ENCODE measurements at regions of chr9 and their contacts with region 1.

Region 1: GRCh38 chr9:21110708-21111576 is 30.7 kb downstream of the IFNW1 start:
- DNase-seq: peak in 1 of 2 donors; percentile 26
- ATAC-seq: peak in 7 of 8 donors; percentile 76 to 92 (median 88)
- H3K4me3 ChIP-seq: no peak overlapping the region
- H3K27ac ChIP-seq: no peak overlapping the region
- H3K4me1 ChIP-seq: no peaks in the 10 kb centered on the region
- H3K27me3 ChIP-seq: no peaks in the 10 kb centered on the region
- CTCF ChIP-seq: peak; percentile 74 to 92 (median 88)

Region 2: DNA sequence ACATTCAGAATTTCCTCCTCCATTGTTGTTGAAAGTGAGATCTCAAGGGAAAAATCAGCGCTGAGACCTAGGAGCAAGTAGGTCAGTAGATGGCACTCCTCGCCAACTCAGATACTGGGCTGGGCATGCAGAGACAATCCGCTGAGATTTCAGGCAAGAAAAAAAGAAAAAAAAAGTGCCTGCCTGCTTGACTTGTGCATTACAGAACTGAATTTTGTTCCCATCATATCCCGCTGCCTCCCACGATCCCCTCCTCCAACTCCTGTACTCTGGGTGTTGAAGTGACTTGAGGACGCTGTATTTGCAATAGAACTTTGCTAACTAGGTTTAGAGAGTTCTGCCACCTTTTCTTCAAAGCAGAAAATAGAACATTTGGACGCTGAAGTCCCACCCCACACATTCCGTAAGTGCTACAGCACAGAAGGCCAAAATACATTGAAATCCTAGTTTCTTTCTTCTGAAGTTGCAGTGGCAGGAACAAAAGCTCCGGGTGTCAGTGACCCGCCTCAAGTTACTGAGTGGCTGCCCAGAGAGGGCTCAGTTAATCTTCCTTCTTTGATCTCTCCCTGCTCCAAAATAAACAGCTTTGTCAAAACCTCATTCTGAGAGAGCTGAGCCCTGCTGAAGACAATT is 754.4 kb before region 1 on chr9:
- intact Hi-C with region 1: loop called in 4 of 10 experiments (anchors 5 to 10 kb)
- DNase-seq: peak; percentile 46 to 79
- ATAC-seq: peak; percentile 77 to 95 (median 91)
- H3K4me3 ChIP-seq: peak overlapping the region in 7 of 10 donors; percentile 0 to 42 (median 33)
- H3K27ac ChIP-seq: peak overlapping the region in 9 of 10 donors; percentile 1 to 76 (median 55)
- H3K4me1 ChIP-seq: peaks cover 0 to 38% (median 17%) of the 10 kb centered on the region in 9 donors
- H3K27me3 ChIP-seq: no peaks in the 10 kb centered on the region
- CTCF ChIP-seq: peak; percentile 55 to 87 (median 69)

Region 3: DNA sequence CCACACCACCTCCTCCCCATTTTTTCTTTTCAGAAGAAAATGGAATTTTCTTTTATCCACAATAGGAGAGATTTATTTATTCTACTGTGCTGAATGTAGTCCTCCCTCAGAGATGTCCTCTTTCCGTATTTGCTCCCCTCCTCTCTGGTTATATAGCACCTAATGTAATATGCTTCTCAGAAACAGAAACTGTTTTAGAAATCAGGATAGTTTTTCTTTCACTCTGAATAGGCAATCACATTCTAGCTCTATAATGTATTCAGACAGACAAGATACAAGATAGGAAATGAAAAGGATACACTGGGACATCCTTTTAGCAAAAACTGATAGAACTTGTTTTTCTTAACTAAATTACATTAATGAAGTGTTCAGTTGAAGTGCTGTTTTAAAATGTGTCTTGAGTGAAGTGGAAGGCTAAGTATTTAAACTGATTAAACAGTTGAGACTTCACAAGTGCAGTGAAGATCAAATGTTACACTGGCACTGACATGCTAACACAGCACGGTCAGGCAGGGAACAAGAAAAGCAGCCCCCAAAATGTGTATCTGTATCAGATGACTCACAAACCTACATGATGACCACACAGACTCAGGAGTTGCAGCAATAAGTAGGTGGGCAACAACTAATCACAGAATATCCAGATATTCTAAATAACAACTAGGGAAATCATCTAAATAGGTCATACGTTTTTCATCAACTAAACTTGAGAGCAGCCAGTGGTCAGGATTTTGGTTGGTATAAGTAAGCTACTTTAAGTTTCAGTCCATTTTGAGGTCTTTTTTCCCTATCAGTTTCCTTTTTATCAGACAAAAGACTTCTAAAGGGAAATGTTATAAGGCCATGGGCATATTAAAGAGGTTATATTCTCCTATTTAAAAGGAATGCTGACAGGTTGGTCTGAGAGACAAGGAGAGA is 749.0 kb before region 1 on chr9:
- intact Hi-C with region 1: loop called in 4 of 10 experiments (anchors 5 to 10 kb)
- DNase-seq: no peak
- ATAC-seq: no peak
- H3K4me3 ChIP-seq: no peak overlapping the region
- H3K27ac ChIP-seq: no peak overlapping the region
- H3K4me1 ChIP-seq: peaks cover 0 to 7% (median 4%) of the 10 kb centered on the region in 9 donors
- H3K27me3 ChIP-seq: no peaks in the 10 kb centered on the region
- CTCF ChIP-seq: no peak

Region 4: DNA sequence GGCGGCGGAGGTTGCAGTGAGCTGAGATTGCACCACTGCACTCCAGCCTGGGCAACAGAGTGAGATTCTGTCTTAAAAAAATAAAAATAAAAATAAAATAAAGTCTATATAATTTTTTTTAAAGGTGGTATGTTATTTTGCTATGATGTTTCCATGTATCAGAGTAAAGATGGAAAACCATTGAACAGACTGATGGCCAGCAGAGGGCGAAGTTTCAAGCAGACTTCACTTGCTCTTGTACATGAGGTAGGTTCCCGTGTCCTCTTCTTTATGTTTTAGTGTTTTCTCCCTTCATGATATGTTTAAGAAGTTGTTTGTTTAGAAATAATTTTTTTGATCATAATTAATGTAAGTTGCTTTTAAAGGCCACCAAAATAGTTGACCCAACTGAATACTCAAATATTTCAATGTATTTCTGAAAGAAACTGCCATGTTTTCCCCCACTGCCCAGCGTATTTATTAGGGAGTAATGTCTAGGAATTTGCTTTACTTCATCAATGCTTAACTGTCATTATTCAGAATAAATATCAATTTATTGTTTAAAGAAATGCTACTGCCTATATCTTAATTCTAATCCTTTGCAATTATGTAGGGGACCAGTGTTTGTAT is 225.9 kb before region 1 on chr9:
- intact Hi-C with region 1: loop called in 7 of 10 experiments (anchors 2 to 10 kb)
- DNase-seq: peak; percentile 24 to 44
- ATAC-seq: no peak
- H3K4me3 ChIP-seq: no peak overlapping the region
- H3K27ac ChIP-seq: no peak overlapping the region
- H3K4me1 ChIP-seq: no peaks in the 10 kb centered on the region
- H3K27me3 ChIP-seq: no peaks in the 10 kb centered on the region
- CTCF ChIP-seq: peak; percentile 28 to 81 (median 67)

Region 5: GRCh38 chr9:20941174-20941690 is 169.7 kb before region 1 on chr9:
- intact Hi-C with region 1: loop called in 3 of 10 experiments (anchors 5 to 10 kb)
- DNase-seq: peak; percentile 13 to 51
- ATAC-seq: peak; percentile 84 to 93 (median 91)
- H3K4me3 ChIP-seq: no peak overlapping the region
- H3K27ac ChIP-seq: no peak overlapping the region
- H3K4me1 ChIP-seq: peaks cover 0 to 8% (median 0%) of the 10 kb centered on the region in 9 donors
- H3K27me3 ChIP-seq: no peaks in the 10 kb centered on the region
- CTCF ChIP-seq: peak; percentile 53 to 94 (median 89)

Region 6: GRCh38 chr9:21016701-21017491 is 94.0 kb before region 1 on chr9:
- intact Hi-C with region 1: loop called in 1 of 10 experiments (anchors 10 kb)
- DNase-seq: no peak
- ATAC-seq: no peak
- H3K4me3 ChIP-seq: no peak overlapping the region
- H3K27ac ChIP-seq: no peak overlapping the region
- H3K4me1 ChIP-seq: peaks cover 0 to 12% (median 3%) of the 10 kb centered on the region in 9 donors
- H3K27me3 ChIP-seq: no peaks in the 10 kb centered on the region
- CTCF ChIP-seq: no peak

Region 7: DNA sequence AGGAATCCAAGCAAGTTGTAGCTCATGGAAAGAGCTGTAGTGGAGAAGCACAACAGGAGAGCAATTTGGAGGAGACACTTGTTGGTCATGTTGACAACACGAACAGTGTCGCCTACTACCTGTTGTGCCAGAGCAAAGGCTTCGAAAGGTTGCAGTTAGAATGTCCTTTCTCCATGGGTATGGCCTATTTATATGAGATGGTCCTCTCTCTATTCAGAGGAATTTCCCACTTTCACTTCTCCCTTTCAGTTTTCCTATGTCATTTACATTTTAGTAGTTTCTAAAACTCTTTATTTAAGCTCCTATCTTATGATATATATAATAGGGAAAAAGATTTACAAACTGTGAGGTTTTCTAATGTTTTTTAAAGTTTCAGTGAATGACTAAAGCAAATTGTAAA is 33.2 kb before region 1 on chr9 and contains the start of gene IFNB1:
- intact Hi-C with region 1: loop called in 1 of 10 experiments (anchors 2 kb)
- DNase-seq: no peak
- ATAC-seq: no peak
- H3K4me3 ChIP-seq: no peak within 1 kb of the TSS
- H3K27ac ChIP-seq: no peak within 1 kb of the TSS
- H3K4me1 ChIP-seq: peaks cover 0 to 26% (median 8%) of the 10 kb centered on the region in 9 donors
- H3K27me3 ChIP-seq: no peaks in the 10 kb centered on the region
- CTCF ChIP-seq: no peak
- total RNA-seq, gene IFNB1: not detected

Region 8: DNA sequence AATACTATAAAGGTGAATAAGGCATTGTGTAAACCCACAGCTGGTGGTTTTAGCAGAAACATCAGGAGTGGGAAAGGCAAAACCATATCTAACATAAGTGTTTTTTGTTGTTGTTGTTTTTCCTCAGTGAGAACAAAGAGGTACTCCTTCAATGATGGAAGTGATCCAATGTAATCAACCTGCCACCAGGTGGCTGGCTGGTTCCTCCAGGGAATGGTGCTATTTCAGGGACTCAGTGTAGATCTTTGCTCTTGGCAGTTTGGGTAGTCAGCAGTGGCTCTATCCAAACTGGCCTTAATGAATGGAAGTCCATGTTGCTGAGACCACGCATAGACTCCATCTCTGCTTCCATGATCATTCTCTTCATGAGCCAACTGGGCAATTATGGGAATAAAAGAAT is 1346.5 kb after region 1 on chr9:
- intact Hi-C with region 1: no loop called
- DNase-seq: no peak
- ATAC-seq: no peak
- H3K4me3 ChIP-seq: no peak overlapping the region
- H3K27ac ChIP-seq: no peak overlapping the region
- H3K4me1 ChIP-seq: no peaks in the 10 kb centered on the region
- H3K27me3 ChIP-seq: no peaks in the 10 kb centered on the region
- CTCF ChIP-seq: no peak

Measured in heart right ventricle (tissue), 16 donors.